Naive thymus-derived CD4-positive, alpha-beta T cell (primary cell): ENCODE measurements at regions of chr16 and their contacts with region 1.

Region 1: GRCh38 chr16:68085259-68086071 is at the start of gene NFATC3:
- DNase-seq: peak; percentile 96 to 99 (median 98)
- ATAC-seq: peak; percentile 92
- H3K4me3 ChIP-seq: peak within 1 kb of the TSS; percentile 88
- H3K4me3 Mint-ChIP-seq: peak within 1 kb of the TSS; percentile 82 to 97 (median 92)
- H3K27ac ChIP-seq: peak within 1 kb of the TSS; percentile 85
- H3K27ac Mint-ChIP-seq: peak within 1 kb of the TSS; percentile 71 to 97 (median 92)
- H3K4me1 ChIP-seq: peaks cover 63 to 66% of the 10 kb centered on the region in 2 donors
- H3K4me1 Mint-ChIP-seq: peaks cover 56 to 79% (median 70%) of the 10 kb centered on the region in 7 donors
- H3K27me3 ChIP-seq: no peaks in the 10 kb centered on the region
- H3K27me3 Mint-ChIP-seq: no peaks in the 10 kb centered on the region
- total RNA-seq, gene NFATC3: 120 to 151 (median 147) TPM

Region 2: DNA sequence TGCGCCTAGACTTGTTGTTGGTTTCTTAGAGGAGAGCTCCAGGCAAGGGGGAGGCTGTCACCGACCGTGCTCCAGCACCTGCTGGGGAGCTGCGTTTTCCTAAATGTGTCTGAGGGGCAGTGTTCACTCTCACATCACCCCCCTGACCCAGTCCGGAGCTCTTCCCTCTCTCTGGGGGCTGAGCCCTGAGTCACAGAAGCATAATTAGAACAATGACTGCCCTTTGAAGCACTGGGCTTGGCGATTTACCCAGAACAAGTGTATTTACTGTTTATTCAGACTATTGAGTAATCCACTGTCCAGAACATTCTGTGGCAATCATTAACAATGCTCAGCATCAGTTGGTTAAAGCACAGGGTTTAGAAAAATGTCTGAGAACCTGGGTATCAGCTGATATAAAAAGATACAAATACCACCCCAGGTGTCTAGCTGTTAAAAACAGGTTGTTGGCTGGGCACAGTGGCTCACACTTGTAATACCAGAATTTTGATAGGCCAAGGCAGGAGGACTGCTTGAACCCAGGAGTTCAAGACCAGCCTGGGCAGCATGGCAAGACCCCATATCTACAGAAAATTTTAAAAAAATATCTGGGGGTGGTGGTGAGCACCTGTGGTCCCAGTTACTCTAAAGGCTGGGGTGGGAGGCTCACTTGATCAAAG is 1089.0 kb before region 1 on chr16:
- CTCF ChIA-PET with region 1: no interaction called
- POLR2A ChIA-PET with region 1: no interaction called
- intact Hi-C with region 1: no loop called
- DNase-seq: no peak
- ATAC-seq: no peak
- H3K4me3 ChIP-seq: no peak overlapping the region
- H3K4me3 Mint-ChIP-seq: no peak overlapping the region
- H3K27ac ChIP-seq: no peak overlapping the region
- H3K27ac Mint-ChIP-seq: no peak overlapping the region
- H3K4me1 ChIP-seq: peaks cover 3 to 5% of the 10 kb centered on the region in 2 donors
- H3K4me1 Mint-ChIP-seq: peaks cover 0 to 29% (median 7%) of the 10 kb centered on the region in 7 donors
- H3K27me3 ChIP-seq: no peaks in the 10 kb centered on the region
- H3K27me3 Mint-ChIP-seq: no peaks in the 10 kb centered on the region

Region 3: DNA sequence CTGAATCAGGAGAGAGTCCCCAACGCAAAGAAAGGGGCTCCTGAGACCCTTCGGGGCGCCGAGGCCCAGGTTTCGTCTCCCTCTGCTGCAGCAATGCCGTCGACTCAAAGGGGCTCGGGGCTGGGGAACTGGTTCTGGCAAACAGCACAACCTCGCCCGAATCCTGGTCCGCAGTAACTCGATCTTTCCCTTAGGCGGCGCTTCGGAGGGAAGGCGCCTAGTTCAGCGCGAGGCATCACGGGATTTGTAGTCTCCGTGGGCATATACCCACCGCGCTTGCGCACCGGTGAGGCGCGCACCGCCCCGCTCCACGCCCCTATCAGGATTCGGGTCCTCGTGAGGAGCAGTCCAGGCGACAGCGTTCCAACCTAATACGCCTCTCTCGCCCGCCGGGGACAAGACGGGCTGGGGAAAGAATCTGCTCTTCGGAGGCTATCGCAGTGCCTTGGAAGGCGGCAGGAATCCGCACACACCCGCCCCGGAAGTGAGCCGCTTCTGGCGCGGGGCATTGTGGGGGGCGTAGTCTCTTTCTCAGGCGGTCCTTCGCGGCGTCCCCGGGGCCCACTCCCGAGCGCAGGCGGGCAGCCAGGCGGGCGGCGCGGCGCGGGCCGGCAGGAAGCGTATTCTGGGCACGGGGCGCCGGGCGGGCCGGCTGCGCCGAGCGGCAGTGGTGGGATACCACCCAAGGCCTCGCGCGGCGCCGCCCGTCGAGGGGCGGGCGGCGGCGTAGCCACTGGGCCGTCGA is 243.5 kb before region 1 on chr16 and contains the start of gene THAP11:
- CTCF ChIA-PET with region 1: no interaction called
- POLR2A ChIA-PET with region 1: interaction called, 6 read pairs
- intact Hi-C with region 1: loop called (anchors 1 to 5 kb)
- DNase-seq: peak; percentile 91 to 99 (median 96)
- ATAC-seq: peak; percentile 76
- H3K4me3 ChIP-seq: peak within 1 kb of the TSS; percentile 100
- H3K4me3 Mint-ChIP-seq: peak within 1 kb of the TSS; percentile 94 to 97 (median 96)
- H3K27ac ChIP-seq: peak within 1 kb of the TSS; percentile 99
- H3K27ac Mint-ChIP-seq: peak within 1 kb of the TSS; percentile 94 to 98 (median 97)
- H3K4me1 ChIP-seq: peaks cover 34 to 36% of the 10 kb centered on the region in 2 donors
- H3K4me1 Mint-ChIP-seq: peaks cover 18 to 41% (median 36%) of the 10 kb centered on the region in 7 donors
- H3K27me3 ChIP-seq: no peaks in the 10 kb centered on the region
- H3K27me3 Mint-ChIP-seq: no peaks in the 10 kb centered on the region
- total RNA-seq, gene THAP11: 29.0 to 62.7 (median 44.6) TPM

Region 4: GRCh38 chr16:67999985-68000384 is 85.5 kb before region 1 on chr16:
- CTCF ChIA-PET with region 1: interaction called, 4 read pairs
- POLR2A ChIA-PET with region 1: interaction called, 14 read pairs
- intact Hi-C with region 1: no loop called
- DNase-seq: peak in 2 of 9 donors; percentile 27 to 39
- ATAC-seq: peak; percentile 34
- H3K4me3 ChIP-seq: peak overlapping the region; percentile 75
- H3K4me3 Mint-ChIP-seq: peak overlapping the region; percentile 80 to 94 (median 90)
- H3K27ac ChIP-seq: peak overlapping the region; percentile 64
- H3K27ac Mint-ChIP-seq: peak overlapping the region; percentile 84 to 99 (median 95)
- H3K4me1 ChIP-seq: peaks cover 29 to 47% of the 10 kb centered on the region in 2 donors
- H3K4me1 Mint-ChIP-seq: peaks cover 28 to 86% (median 57%) of the 10 kb centered on the region in 7 donors
- H3K27me3 ChIP-seq: no peaks in the 10 kb centered on the region
- H3K27me3 Mint-ChIP-seq: no peaks in the 10 kb centered on the region

Region 5: GRCh38 chr16:68064791-68065365 is 20.6 kb before region 1 on chr16:
- CTCF ChIA-PET with region 1: interaction called, 57 read pairs
- POLR2A ChIA-PET with region 1: interaction called, 300 read pairs
- intact Hi-C with region 1: loop called (anchors 1 to 2 kb)
- DNase-seq: peak; percentile 45 to 72 (median 65)
- ATAC-seq: peak; percentile 84
- H3K4me3 ChIP-seq: no peak overlapping the region
- H3K4me3 Mint-ChIP-seq: peak overlapping the region; percentile 3 to 69 (median 34)
- H3K27ac ChIP-seq: peak overlapping the region; percentile 52
- H3K27ac Mint-ChIP-seq: peak overlapping the region; percentile 65 to 90 (median 83)
- H3K4me1 ChIP-seq: peaks cover 56 to 67% of the 10 kb centered on the region in 2 donors
- H3K4me1 Mint-ChIP-seq: peaks cover 60 to 86% (median 76%) of the 10 kb centered on the region in 7 donors
- H3K27me3 ChIP-seq: no peaks in the 10 kb centered on the region
- H3K27me3 Mint-ChIP-seq: no peaks in the 10 kb centered on the region

Region 6: DNA sequence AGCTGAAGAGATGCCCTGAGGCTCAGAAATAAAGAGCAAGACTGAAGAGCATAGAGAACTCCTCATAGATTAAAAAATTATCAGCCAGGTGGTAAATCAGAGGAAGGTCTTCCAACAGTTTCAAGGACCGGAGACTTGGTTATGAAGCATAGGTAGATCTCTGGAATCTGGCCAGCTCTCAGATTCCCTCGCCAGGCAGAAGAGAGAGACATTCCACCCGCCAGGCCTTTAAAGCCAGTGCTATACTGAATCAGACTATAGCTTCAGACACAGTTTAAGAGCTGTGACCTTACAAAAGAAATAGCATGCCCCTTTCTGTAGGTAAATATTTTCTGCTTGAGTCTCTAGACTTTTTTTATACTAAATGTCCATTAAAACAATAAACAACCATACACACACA is 70.0 kb after region 1 on chr16:
- CTCF ChIA-PET with region 1: no interaction called
- POLR2A ChIA-PET with region 1: no interaction called
- intact Hi-C with region 1: no loop called
- DNase-seq: no peak
- ATAC-seq: no peak
- H3K4me3 ChIP-seq: no peak overlapping the region
- H3K4me3 Mint-ChIP-seq: no peak overlapping the region
- H3K27ac ChIP-seq: no peak overlapping the region
- H3K27ac Mint-ChIP-seq: peak overlapping the region; percentile 3 to 78 (median 63)
- H3K4me1 ChIP-seq: no peaks in the 10 kb centered on the region
- H3K4me1 Mint-ChIP-seq: peaks cover 4 to 38% (median 23%) of the 10 kb centered on the region in 7 donors
- H3K27me3 ChIP-seq: no peaks in the 10 kb centered on the region
- H3K27me3 Mint-ChIP-seq: no peaks in the 10 kb centered on the region

Region 7: DNA sequence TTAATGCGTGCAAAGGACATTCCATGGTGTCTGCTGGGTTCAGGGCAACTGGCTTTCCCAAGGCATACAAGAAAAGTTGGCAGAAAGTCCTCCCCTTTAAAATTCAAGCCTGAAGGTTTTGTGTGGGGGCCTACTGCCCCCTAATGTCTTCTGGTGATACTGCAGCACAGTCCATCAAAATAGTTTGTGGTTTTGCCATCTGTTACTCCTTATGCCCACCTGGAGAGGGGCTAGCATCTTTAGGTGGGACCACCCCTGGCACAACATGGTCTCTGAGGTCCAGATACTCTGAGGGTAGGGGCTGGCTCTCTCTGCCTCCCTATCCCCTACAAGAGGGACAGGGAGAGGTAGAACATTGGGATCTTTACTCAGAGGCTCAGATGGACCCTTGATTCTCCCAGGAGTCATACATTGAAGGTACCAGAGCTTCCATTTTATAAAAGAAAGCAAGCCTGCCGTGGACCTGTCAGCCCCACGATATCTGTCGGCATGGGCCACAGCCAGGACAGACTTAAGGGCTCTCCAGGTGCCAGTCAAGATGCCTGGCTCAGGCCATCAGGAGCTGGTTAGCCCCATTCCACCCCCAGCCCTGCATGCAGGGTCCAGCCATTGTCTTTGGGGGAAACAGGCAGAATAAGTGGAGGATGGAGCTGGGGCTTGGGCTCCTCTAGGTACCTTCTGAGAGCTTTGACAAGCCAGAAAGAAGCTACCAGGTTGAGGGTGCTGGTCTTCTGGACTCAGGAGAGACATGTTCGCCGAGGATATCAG is 144.2 kb after region 1 on chr16:
- CTCF ChIA-PET with region 1: interaction called, 3 read pairs
- POLR2A ChIA-PET with region 1: interaction called, 4 read pairs
- intact Hi-C with region 1: loop called in 1 of 2 experiments (anchors 1 kb)
- DNase-seq: peak in 6 of 9 donors; percentile 44 to 64 (median 58)
- ATAC-seq: peak; percentile 61
- H3K4me3 ChIP-seq: no peak overlapping the region
- H3K4me3 Mint-ChIP-seq: peak overlapping the region in 1 of 10 donors; percentile 29
- H3K27ac ChIP-seq: no peak overlapping the region
- H3K27ac Mint-ChIP-seq: peak overlapping the region; percentile 63 to 90 (median 77)
- H3K4me1 ChIP-seq: peaks cover 0 to 21% of the 10 kb centered on the region in 2 donors
- H3K4me1 Mint-ChIP-seq: peaks cover 18 to 53% (median 47%) of the 10 kb centered on the region in 7 donors
- H3K27me3 ChIP-seq: no peaks in the 10 kb centered on the region
- H3K27me3 Mint-ChIP-seq: no peaks in the 10 kb centered on the region

Region 8: GRCh38 chr16:68310761-68311511 is 225.5 kb after region 1 on chr16 and contains the starts of genes PRMT7 and SLC7A6OS:
- CTCF ChIA-PET with region 1: no interaction called
- POLR2A ChIA-PET with region 1: interaction called, 8 read pairs
- intact Hi-C with region 1: loop called (anchors 1 kb)
- DNase-seq: peak; percentile 77 to 94 (median 92)
- ATAC-seq: peak; percentile 99
- H3K4me3 ChIP-seq: peak within 1 kb of the TSS; percentile 99
- H3K4me3 Mint-ChIP-seq: peak within 1 kb of the TSS; percentile 88 to 100 (median 98)
- H3K27ac ChIP-seq: peak within 1 kb of the TSS; percentile 91
- H3K27ac Mint-ChIP-seq: peak within 1 kb of the TSS; percentile 77 to 99 (median 96)
- H3K4me1 ChIP-seq: peaks cover 25 to 32% of the 10 kb centered on the region in 2 donors
- H3K4me1 Mint-ChIP-seq: peaks cover 33 to 69% (median 59%) of the 10 kb centered on the region in 7 donors
- H3K27me3 ChIP-seq: no peaks in the 10 kb centered on the region
- H3K27me3 Mint-ChIP-seq: no peaks in the 10 kb centered on the region
- total RNA-seq, gene PRMT7: 60.8 to 95.1 (median 89.4) TPM
- total RNA-seq, gene SLC7A6OS: 31.4 to 50.3 (median 34.8) TPM